GM12878 (cell line): ENCODE measurements at regions of chr1 and their contacts with region 1.

Region 1: DNA sequence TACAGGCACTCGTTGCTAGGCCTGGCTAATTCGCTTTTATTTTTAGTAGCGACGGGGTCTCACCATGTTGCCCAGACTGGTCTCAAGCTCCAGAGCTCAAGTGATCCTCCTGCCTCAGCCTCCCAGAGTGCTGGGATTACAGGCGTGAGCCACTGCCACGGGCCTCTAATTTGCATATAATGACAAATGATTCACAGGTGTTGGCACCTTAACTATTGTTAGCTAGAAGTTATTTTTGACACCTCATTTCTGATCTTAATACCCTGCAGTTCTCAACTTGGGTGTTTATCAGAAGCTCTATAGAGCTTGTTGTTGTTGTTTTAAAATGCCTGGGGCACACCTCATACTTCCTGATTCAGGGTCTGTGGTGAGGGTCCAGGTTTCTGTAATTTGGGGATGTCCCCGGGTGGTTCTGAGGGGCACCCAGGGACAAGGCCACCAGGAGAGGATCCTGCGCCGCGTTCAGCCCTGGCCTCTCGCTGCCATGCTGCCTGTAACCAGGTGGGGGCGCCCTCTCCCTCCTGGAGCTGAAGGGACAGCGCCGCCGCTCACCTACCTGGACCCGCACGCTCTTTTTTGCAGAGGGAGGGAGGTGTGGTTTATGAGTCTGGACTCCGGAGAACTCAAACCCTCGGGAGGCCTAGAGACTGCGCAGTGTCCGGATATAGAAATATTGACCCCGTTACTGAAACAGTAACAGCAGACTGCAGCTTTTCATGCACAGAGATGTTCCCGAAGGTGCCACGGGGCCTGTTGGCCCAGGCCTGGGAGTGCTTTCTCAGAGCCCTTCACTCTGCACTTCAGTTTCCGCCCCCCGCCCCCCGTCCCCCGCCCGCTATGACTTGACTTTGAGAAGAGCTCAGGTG is 23.0 kb upstream of the NEK2 start:
- DNase-seq: peak; percentile 55
- ATAC-seq: peak; percentile 78
- H3K4me3 ChIP-seq: 0 out of 2 replicates have a peak overlapping the region, but pooled peaks have one; percentile 31
- H3K27ac ChIP-seq: no peak overlapping the region
- H3K4me1 ChIP-seq: peaks cover 40% of the 10 kb centered on the region
- H3K27me3 ChIP-seq: no peaks in the 10 kb centered on the region
- CTCF ChIP-seq: peak; percentile 98 to 99 (median 99); a peak in 5 of 6 replicates
- EP300 ChIP-seq: no peak
- POLR2A ChIP-seq: no peak
- RAD21 ChIP-seq: peak; percentile 93

Region 2: GRCh38 chr1:211675230-211676105 is 22.9 kb before region 1 on chr1 and contains the start of gene NEK2:
- CTCF ChIA-PET with region 1: interaction called, 244 read pairs
- POLR2A ChIA-PET with region 1: interaction called, 66 read pairs
- RAD21 ChIA-PET with region 1: interaction called, 224 read pairs
- SMC1A ChIA-PET with region 1: interaction called, 311 read pairs
- in situ Hi-C with region 1: no loop called
- intact Hi-C with region 1: loop called (anchors 1 kb)
- DNase-seq: peak; percentile 80
- ATAC-seq: peak; percentile 97
- H3K4me3 ChIP-seq: peak within 1 kb of the TSS; percentile 81
- H3K27ac ChIP-seq: peak within 1 kb of the TSS; percentile 68
- H3K4me1 ChIP-seq: peaks cover 11% of the 10 kb centered on the region
- H3K27me3 ChIP-seq: no peaks in the 10 kb centered on the region
- CTCF ChIP-seq: no peak
- EP300 ChIP-seq: no peak
- POLR2A ChIP-seq: peak; percentile 82
- RAD21 ChIP-seq: no peak
- polyA plus RNA-seq, gene NEK2: 16.7 to 21.3 TPM

Region 3: GRCh38 chr1:211741116-211741515 is 42.7 kb after region 1 on chr1:
- CTCF ChIA-PET with region 1: interaction called, 46 read pairs
- POLR2A ChIA-PET with region 1: interaction called, 4 read pairs
- RAD21 ChIA-PET with region 1: interaction called, 33 read pairs
- SMC1A ChIA-PET with region 1: interaction called, 36 read pairs
- in situ Hi-C with region 1: no loop called
- intact Hi-C with region 1: loop called (anchors 5 kb)
- DNase-seq: no peak
- ATAC-seq: no peak
- H3K4me3 ChIP-seq: no peak overlapping the region
- H3K27ac ChIP-seq: no peak overlapping the region
- H3K4me1 ChIP-seq: peaks cover 24% of the 10 kb centered on the region
- H3K27me3 ChIP-seq: no peaks in the 10 kb centered on the region
- CTCF ChIP-seq: no peak
- EP300 ChIP-seq: no peak
- POLR2A ChIP-seq: no peak
- RAD21 ChIP-seq: no peak

Region 4: GRCh38 chr1:211822677-211823407 is 124.4 kb after region 1 on chr1:
- CTCF ChIA-PET with region 1: interaction called, 59 read pairs
- POLR2A ChIA-PET with region 1: interaction called, 30 read pairs
- RAD21 ChIA-PET with region 1: interaction called, 85 read pairs
- SMC1A ChIA-PET with region 1: interaction called, 90 read pairs
- in situ Hi-C with region 1: no loop called
- intact Hi-C with region 1: no loop called
- DNase-seq: no peak
- ATAC-seq: peak; percentile 76
- H3K4me3 ChIP-seq: no peak overlapping the region; the same call in 1 of the 2 replicates
- H3K27ac ChIP-seq: no peak overlapping the region
- H3K4me1 ChIP-seq: no peaks in the 10 kb centered on the region
- H3K27me3 ChIP-seq: no peaks in the 10 kb centered on the region
- CTCF ChIP-seq: no peak
- EP300 ChIP-seq: no peak
- POLR2A ChIP-seq: no peak
- RAD21 ChIP-seq: no peak

Region 5: DNA sequence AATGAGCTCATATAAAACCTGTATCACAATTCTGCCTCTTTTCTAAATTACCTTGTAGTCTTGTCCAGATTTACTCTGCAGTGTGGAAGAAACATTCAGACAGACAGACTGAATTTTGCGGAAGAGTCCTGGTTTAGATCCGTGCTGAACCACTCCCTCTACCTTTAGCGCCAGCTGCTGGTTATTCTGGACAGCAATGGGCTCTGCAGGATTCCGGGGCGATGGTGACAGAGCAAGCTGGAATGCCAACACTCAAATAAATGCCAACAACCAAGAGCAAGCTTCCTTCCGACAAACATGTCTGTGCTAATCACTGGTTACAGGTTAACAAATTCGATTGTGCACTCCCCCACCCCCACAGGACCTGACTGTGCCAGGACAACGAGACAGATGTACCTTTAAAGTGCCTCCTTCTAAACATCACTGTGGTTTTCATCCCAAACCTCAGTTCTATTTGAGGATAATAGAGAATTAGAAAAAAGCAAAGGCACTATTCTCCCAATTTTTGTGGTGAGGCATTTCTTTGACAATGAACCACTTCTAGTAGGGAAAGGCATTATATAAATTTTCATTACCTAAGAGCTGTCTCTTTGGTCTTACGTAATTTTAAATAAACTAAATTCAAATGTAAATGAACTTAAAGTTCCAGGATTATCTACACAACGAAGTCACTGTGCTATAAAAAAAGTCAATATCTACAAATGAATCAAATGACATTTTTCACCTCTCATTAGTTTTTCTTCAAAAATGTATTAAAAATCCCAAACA is 246.5 kb after region 1 on chr1:
- CTCF ChIA-PET with region 1: interaction called, 37 read pairs
- POLR2A ChIA-PET with region 1: interaction called, 21 read pairs
- RAD21 ChIA-PET with region 1: interaction called, 79 read pairs
- SMC1A ChIA-PET with region 1: interaction called, 82 read pairs
- in situ Hi-C with region 1: no loop called
- intact Hi-C with region 1: no loop called
- DNase-seq: no peak
- ATAC-seq: no peak
- H3K4me3 ChIP-seq: no peak overlapping the region
- H3K27ac ChIP-seq: no peak overlapping the region
- H3K4me1 ChIP-seq: peaks cover 8% of the 10 kb centered on the region; the same call in 1 of the 2 replicates
- H3K27me3 ChIP-seq: no peaks in the 10 kb centered on the region
- CTCF ChIP-seq: no peak
- EP300 ChIP-seq: no peak
- POLR2A ChIP-seq: no peak
- RAD21 ChIP-seq: no peak

Region 6: DNA sequence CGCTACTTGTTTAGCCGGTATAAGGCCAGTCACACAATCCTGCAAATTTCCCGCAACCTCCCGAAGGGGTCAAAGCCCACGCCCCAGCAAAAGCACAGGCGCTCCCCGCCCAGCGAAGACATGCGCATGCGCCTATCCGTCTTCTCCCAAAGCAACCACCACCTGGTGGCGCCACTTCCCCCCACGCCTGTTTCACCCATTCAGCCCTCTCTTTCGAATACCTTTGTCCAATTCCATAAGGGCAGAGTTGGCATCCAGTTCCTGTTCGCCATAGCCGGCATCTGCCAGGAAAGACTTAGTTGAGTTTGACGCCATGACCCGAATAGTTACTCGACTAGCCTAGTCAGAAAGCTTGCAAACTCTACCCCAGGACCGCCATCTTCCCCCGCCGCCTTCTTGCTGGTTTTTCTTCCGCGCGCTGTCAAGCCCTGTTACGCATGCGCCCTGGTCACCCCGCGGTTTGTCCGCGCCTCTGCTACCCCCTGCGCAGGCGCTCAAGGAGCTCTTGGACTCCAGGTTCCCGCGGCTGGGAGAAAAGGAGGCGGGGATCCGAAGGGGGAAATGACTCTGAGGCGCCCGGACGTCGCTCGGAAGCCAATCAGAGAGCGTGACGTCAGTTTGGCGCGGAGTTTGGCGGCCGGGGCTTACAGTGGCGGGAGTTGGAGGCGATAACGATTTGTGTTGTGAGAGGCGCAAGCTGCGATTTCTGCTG is 336.9 kb after region 1 on chr1 and contains the starts of genes DTL and INTS7:
- CTCF ChIA-PET with region 1: interaction called, 199 read pairs
- POLR2A ChIA-PET with region 1: interaction called, 32 read pairs
- RAD21 ChIA-PET with region 1: interaction called, 177 read pairs
- SMC1A ChIA-PET with region 1: interaction called, 158 read pairs
- in situ Hi-C with region 1: loop called (anchors 5 kb)
- intact Hi-C with region 1: loop called (anchors 1 kb)
- DNase-seq: peak; percentile 96
- ATAC-seq: peak; percentile 77
- H3K4me3 ChIP-seq: peak within 1 kb of the TSS; percentile 90
- H3K27ac ChIP-seq: peak within 1 kb of the TSS; percentile 98
- H3K4me1 ChIP-seq: peaks cover 17% of the 10 kb centered on the region
- H3K27me3 ChIP-seq: no peaks in the 10 kb centered on the region
- CTCF ChIP-seq: peak; percentile 82 to 97 (median 83)
- EP300 ChIP-seq: no peak
- POLR2A ChIP-seq: peak; percentile 89
- RAD21 ChIP-seq: no peak
- polyA plus RNA-seq, gene DTL: 24.1 to 24.6 TPM
- polyA plus RNA-seq, gene INTS7: 17.1 to 20.1 TPM

Region 7: DNA sequence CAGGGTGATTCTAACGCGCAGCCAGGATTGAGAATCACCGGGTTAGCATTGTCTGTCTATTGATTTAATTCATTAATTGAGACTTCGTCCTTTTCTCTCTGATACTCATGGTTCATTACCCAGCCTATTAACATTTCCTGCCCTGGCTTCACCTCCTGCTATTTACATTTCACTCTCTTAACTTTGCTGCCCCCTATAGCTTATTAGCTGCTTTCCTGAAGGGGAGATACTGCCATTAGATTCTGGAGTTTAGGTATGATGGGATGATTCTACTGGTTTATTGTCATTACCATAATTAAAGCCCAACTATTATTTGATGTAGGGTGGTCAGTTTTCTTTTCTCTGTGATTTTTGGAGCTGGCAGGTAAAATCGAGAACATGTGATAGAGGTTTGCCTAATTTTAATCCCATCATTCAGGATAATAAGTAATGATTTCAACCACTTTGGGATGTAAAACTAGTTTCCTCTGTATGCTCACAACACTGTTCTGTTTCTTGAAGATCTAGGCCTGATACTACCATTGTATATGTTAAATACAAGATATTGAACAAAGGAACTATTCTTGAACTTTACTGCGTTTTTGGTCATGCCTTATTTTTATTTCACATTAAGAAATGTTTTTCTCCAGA is 593.2 kb after region 1 on chr1:
- CTCF ChIA-PET with region 1: interaction called, 4 read pairs
- POLR2A ChIA-PET with region 1: interaction called, 4 read pairs
- RAD21 ChIA-PET with region 1: interaction called, 4 read pairs
- SMC1A ChIA-PET with region 1: interaction called, 11 read pairs
- in situ Hi-C with region 1: no loop called
- intact Hi-C with region 1: loop called (anchors 5 kb)
- DNase-seq: no peak
- ATAC-seq: peak; percentile 87
- H3K4me3 ChIP-seq: peak overlapping the region; percentile 54; the same call in 1 of the 2 replicates
- H3K27ac ChIP-seq: no peak overlapping the region
- H3K4me1 ChIP-seq: peaks cover 18% of the 10 kb centered on the region
- H3K27me3 ChIP-seq: no peaks in the 10 kb centered on the region
- CTCF ChIP-seq: peak; percentile 63 to 87 (median 76); a peak in 5 of 6 replicates
- EP300 ChIP-seq: no peak
- POLR2A ChIP-seq: no peak
- RAD21 ChIP-seq: peak; percentile 93